Activated CD4-positive, alpha-beta memory T cell treated with anti-CD3 and anti-CD28 coated beads for 36 hours (primary cell): ENCODE measurements at regions of chrX and their contacts with region 1.

Region 1: GRCh38 chrX:153667956-153668396 is 5.6 kb downstream of the PNCK start:
- DNase-seq: peak; percentile 87
- H3K4me3 Mint-ChIP-seq: peak overlapping the region; percentile 65
- H3K27ac Mint-ChIP-seq: no peak overlapping the region
- H3K4me1 Mint-ChIP-seq: peaks cover 7% of the 10 kb centered on the region
- H3K27me3 Mint-ChIP-seq: peaks cover 6% of the 10 kb centered on the region

Region 2: GRCh38 chrX:152941328-152942106 is 726.5 kb before region 1 on chrX:
- CTCF ChIA-PET with region 1: interaction called, 17 read pairs
- POLR2A ChIA-PET with region 1: no interaction called
- intact Hi-C with region 1: loop called (anchors 5 kb)
- DNase-seq: peak; percentile 93
- H3K4me3 Mint-ChIP-seq: peak overlapping the region; percentile 80
- H3K27ac Mint-ChIP-seq: peak overlapping the region; percentile 82
- H3K4me1 Mint-ChIP-seq: peaks cover 2% of the 10 kb centered on the region
- H3K27me3 Mint-ChIP-seq: no peaks in the 10 kb centered on the region

Region 3: GRCh38 chrX:153032397-153033118 is 635.4 kb before region 1 on chrX:
- CTCF ChIA-PET with region 1: interaction called, 9 read pairs
- POLR2A ChIA-PET with region 1: no interaction called
- intact Hi-C with region 1: loop called (anchors 10 kb)
- DNase-seq: peak; percentile 81
- H3K4me3 Mint-ChIP-seq: peak overlapping the region; percentile 81
- H3K27ac Mint-ChIP-seq: peak overlapping the region; percentile 92
- H3K4me1 Mint-ChIP-seq: peaks cover 9% of the 10 kb centered on the region
- H3K27me3 Mint-ChIP-seq: no peaks in the 10 kb centered on the region

Region 4: DNA sequence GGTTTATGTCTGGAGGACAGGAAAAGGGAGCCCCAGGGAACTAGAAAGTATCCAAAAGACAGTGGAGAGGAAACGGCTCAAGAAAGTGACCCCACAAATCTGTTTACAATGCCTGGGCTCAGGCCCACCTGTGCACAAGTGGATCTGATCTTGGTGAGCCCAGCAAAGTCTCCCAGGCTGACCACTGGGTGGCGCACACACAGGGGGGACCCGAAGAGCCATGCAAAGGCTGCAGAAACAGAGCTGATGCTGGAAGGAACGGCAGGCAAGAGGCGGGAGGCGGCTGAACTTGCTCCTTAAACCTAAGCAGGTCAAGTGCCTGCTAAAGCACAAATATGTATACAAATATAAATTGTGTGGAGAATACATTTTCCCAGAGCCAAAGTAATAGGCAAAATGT is 207.1 kb before region 1 on chrX:
- CTCF ChIA-PET with region 1: no interaction called
- POLR2A ChIA-PET with region 1: no interaction called
- intact Hi-C with region 1: no loop called
- DNase-seq: peak; percentile 54
- H3K4me3 Mint-ChIP-seq: no peak overlapping the region
- H3K27ac Mint-ChIP-seq: no peak overlapping the region
- H3K4me1 Mint-ChIP-seq: no peaks in the 10 kb centered on the region
- H3K27me3 Mint-ChIP-seq: no peaks in the 10 kb centered on the region

Region 5: DNA sequence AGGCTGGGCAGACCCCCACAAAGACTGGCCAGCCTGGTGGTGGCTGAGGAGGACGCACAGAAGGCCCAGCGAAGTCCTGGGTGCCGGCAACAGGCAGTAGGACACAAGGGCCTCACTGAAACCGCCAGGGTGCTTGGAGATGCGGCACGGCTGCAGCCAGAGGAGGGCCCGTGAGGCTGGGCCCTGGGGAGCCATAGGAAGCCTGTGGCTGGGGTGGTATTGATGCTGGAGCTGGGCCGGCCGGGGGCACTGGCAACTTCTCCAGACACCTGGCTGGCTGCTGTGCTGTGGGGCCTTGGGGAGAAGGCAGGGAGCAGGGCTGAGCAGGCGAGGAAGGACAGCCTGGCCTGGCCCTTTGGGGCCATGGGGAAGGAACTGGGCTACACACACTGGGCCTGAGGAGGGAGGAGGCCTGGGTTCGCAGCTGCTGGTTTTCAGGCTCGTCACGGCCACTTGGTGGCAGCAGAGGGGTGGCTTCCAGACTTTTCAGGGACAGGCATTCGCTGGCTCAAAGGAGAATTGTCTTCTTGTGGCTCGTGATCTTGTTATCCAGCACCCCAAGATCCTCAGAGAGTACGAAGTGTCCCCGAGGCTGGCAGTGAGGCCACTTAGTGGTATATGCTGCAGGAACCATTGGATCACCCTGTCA is 113.3 kb before region 1 on chrX:
- CTCF ChIA-PET with region 1: interaction called, 49 read pairs
- POLR2A ChIA-PET with region 1: no interaction called
- intact Hi-C with region 1: loop called (anchors 1 kb)
- DNase-seq: peak; percentile 70
- H3K4me3 Mint-ChIP-seq: no peak overlapping the region
- H3K27ac Mint-ChIP-seq: no peak overlapping the region
- H3K4me1 Mint-ChIP-seq: no peaks in the 10 kb centered on the region
- H3K27me3 Mint-ChIP-seq: no peaks in the 10 kb centered on the region

Region 6: DNA sequence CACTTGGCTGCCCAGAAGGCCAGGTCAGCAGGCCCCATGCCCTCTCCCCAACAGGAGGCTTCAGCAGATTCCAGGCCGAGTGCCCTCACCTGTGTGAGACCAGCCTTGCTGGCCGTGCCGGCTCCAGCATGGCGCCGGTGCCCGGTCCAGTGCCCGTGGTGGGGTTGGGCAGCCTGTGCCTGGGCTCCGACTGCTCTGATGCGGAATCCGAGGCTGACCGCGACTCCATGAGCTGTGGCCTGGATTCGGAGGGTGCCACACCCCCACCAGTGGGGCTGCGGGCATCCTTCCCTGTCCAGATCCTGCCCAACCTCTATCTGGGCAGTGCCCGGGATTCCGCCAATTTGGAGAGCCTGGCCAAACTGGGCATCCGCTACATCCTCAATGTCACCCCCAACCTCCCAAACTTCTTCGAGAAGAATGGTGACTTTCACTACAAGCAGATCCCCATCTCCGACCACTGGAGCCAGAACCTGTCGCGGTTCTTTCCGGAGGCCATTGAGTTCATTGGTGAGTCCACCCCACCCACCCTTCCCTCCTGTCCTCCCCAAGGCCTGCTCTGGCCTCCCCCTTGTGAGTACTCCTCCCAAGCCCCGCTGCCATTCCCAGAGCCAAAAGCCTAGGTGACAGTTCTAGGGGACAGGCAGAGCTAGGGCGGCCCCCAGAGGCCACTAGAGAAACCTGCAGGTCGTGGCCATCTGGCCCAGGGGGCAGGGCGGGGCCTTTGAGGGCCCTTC is 18.6 kb before region 1 on chrX:
- CTCF ChIA-PET with region 1: interaction called, 31 read pairs
- POLR2A ChIA-PET with region 1: no interaction called
- intact Hi-C with region 1: no loop called
- DNase-seq: peak; percentile 49
- H3K4me3 Mint-ChIP-seq: no peak overlapping the region
- H3K27ac Mint-ChIP-seq: no peak overlapping the region
- H3K4me1 Mint-ChIP-seq: no peaks in the 10 kb centered on the region
- H3K27me3 Mint-ChIP-seq: peaks cover 18% of the 10 kb centered on the region

Region 7: DNA sequence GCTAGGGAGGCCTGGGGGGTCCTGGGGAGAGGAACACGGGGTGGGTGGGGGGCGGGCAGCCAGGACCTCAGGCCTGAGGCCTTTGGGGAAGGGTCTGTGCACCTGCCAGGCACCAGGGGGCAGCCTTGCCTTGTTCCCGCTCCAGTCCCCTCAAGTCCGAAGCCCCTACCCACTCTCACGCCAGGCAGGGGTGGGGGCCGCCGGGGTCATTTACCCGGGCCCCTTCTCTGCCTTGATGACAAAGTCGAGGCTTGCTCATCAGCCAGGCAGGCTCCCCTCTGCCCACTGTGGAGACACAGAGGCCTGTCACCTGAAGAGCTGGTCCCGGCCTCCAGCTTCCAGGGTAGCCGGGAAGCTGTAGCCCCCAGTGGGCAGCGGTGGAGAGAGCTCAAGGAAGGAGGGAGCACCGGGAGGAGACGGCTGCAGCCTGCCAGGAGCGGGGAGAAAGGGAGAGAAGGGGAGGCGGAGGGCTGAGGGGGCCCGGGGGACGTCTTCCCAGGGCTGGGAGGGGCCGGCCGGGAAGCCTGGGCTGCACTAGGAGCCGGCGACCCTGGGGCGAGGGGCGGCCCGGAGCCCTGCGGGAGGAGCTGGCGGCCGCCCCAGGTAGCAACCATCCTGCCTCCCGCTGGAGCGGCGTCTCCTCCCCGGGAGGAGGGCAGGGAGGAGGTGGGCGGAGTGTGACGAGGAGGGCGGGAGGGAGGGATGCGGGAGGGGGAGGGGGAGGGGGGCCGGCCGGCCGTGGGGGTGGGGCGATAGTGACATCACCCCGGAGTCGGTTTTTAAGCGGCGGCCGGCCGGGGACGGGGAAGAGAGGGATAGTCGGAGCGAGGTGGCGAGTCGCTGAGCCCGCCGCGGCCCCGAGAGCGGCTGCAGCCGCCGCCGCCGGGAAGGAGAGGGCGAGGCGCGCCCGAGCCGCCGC is 19.4 kb after region 1 on chrX and contains the start of gene SLC6A8:
- CTCF ChIA-PET with region 1: interaction called, 10 read pairs
- POLR2A ChIA-PET with region 1: no interaction called
- intact Hi-C with region 1: no loop called
- DNase-seq: peak; percentile 48
- H3K4me3 Mint-ChIP-seq: peak within 1 kb of the TSS; percentile 68
- H3K27ac Mint-ChIP-seq: no peak within 1 kb of the TSS
- H3K4me1 Mint-ChIP-seq: no peaks in the 10 kb centered on the region
- H3K27me3 Mint-ChIP-seq: peaks cover 2% of the 10 kb centered on the region
- total RNA-seq, gene SLC6A8: 0.95 to 1.3 TPM